Endothelial cell of umbilical vein (primary cell): ENCODE measurements at regions of chr4 and their contacts with region 1.

Region 1: GRCh38 chr4:123776254-123776653 is 379.7 kb downstream of the SPRY1 start:
- DNase-seq: no peak
- H3K4me3 ChIP-seq: no peak overlapping the region
- H3K27ac ChIP-seq: no peak overlapping the region
- H3K4me1 ChIP-seq: peaks cover 11% of the 10 kb centered on the region
- H3K27me3 ChIP-seq: no peaks in the 10 kb centered on the region
- CTCF ChIP-seq: no peak
- POLR2A ChIP-seq: no peak

Region 2: DNA sequence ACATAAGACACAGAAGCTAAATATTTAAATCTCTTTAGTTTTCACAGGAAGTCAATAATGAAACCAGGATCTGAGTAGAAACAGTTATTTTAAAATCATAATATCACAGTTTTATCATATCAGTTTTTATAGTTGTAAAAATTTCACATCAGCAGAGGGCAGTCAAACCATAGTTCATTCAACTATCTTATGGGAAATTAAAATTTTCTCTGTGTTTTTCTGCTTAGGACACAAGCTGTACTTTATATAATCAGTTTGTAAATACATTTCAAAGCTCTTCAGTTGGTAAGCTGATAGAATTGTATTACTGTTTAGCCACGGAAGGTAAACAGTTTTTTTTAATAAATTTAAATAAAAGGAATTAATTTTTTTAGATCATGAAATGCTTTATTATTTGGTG is 649.0 kb before region 1 on chr4:
- CTCF ChIA-PET with region 1: interaction called, 7 read pairs
- POLR2A ChIA-PET with region 1: no interaction called
- dilution Hi-C with region 1: no loop called
- intact Hi-C with region 1: loop called (anchors 10 kb)
- DNase-seq: peak; percentile 67
- H3K4me3 ChIP-seq: no peak overlapping the region
- H3K27ac ChIP-seq: peak overlapping the region; percentile 65
- H3K4me1 ChIP-seq: peaks cover 19% of the 10 kb centered on the region
- H3K27me3 ChIP-seq: no peaks in the 10 kb centered on the region
- CTCF ChIP-seq: no peak
- POLR2A ChIP-seq: no peak

Region 3: DNA sequence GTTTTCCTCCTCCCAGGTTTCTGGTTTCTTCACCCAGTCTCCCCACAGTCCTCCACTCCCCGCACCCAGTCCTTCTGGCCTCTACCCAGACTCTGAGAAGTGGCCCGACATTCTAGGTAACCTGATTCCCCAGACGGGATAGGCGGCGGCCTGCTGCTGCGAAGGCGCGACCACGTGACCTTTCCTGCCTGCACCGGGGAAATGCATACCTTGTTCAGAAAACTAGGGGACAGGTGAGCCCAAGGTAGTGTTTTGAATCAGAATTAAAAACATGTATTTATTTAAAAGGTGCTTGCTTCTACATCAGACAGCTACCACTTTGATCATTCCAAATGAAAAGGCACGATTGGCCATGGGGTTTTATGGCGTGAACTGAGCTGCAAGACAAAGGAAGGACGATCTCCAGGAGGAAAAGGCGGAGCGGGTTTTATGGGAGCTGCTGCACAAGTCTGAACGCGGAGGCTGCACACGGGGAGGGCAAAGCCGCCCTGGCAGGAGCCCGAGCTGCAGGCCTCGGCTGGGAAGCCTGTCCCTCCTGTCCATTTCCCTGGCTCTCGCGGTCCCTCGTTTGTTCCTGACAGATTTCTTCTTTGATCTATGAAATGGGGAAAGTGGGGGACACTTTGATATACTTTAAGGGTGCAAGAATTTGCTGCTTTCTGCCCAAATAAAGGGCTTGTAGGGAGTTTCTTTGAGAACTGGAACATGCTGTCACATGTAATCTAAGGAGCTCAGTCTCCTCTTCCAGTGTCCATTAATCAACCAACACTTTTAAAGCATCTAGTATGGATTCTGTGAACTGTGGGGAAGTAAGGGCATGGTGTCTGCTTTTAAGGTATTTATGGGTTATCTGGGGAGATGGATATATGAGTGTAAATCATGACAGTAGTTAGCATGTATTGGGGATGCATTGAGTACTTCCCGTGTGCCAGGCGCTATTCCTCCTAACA is 228.8 kb before region 1 on chr4:
- CTCF ChIA-PET with region 1: no interaction called
- POLR2A ChIA-PET with region 1: no interaction called
- dilution Hi-C with region 1: no loop called
- intact Hi-C with region 1: no loop called
- DNase-seq: no peak
- H3K4me3 ChIP-seq: no peak overlapping the region
- H3K27ac ChIP-seq: no peak overlapping the region
- H3K4me1 ChIP-seq: no peaks in the 10 kb centered on the region
- H3K27me3 ChIP-seq: peaks cover 52 to 54% of the 10 kb centered on the region in 2 experiments
- CTCF ChIP-seq: no peak
- POLR2A ChIP-seq: no peak

Region 4: GRCh38 chr4:123922847-123923246 is 146.6 kb after region 1 on chr4:
- CTCF ChIA-PET with region 1: interaction called, 13 read pairs
- POLR2A ChIA-PET with region 1: no interaction called
- dilution Hi-C with region 1: no loop called
- intact Hi-C with region 1: loop called (anchors 1 kb)
- DNase-seq: peak; percentile 91
- H3K4me3 ChIP-seq: no peak overlapping the region
- H3K27ac ChIP-seq: peak overlapping the region; percentile 93
- H3K4me1 ChIP-seq: peaks cover 20% of the 10 kb centered on the region
- H3K27me3 ChIP-seq: no peaks in the 10 kb centered on the region
- CTCF ChIP-seq: no peak
- POLR2A ChIP-seq: peak; percentile 78

Region 5: DNA sequence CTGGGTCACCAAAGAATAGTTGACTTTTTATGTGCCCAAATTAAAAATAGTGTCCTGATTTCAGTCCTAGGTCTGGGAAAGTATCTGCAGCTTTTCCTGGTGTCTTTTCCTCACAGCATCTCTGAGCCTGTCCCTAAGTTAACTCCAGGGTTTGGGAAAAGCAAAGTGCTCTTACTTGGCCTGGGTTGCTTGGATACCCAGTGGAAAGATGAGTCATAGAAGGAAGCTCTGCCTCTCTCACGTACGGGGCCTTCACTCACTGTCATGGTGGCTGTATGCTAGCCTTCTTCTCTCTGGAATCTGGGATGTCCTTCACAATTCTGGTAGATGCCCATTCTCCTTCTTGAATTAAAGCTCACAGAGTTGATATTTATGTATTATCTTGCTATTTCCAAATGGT is 329.0 kb after region 1 on chr4:
- CTCF ChIA-PET with region 1: interaction called, 11 read pairs
- POLR2A ChIA-PET with region 1: no interaction called
- dilution Hi-C with region 1: no loop called
- intact Hi-C with region 1: no loop called
- DNase-seq: peak; percentile 22
- H3K4me3 ChIP-seq: no peak overlapping the region
- H3K27ac ChIP-seq: no peak overlapping the region
- H3K4me1 ChIP-seq: peaks cover 3% of the 10 kb centered on the region
- H3K27me3 ChIP-seq: no peaks in the 10 kb centered on the region
- CTCF ChIP-seq: no peak
- POLR2A ChIP-seq: no peak

Region 6: DNA sequence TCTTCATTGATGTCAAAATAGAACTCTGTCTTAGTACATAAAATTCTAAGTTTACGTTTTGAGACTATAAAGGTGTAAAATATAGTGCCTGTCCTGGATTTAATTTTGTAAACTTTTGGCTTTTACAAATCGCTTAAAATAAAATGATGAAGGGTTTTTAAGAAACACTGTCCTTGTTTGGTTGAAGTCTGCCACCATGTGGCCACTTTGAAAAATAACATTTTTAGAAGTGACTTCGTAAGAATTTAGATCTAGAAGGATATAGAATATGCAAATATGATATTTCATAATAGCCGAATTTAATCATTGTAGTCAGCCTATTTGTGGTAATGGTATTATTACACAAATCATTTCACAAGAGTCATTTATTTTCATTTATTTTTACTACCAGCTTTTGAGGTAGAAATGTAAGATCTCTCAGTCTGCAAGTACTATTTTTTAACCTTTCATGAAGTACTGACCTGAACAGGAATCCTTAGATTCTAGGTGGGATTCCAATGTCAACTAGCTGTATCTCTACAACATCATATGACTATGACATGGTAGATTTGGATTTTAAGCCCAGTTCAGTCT is 1507.5 kb after region 1 on chr4:
- CTCF ChIA-PET with region 1: interaction called, 13 read pairs
- POLR2A ChIA-PET with region 1: no interaction called
- dilution Hi-C with region 1: no loop called
- intact Hi-C with region 1: no loop called
- DNase-seq: peak; percentile 54
- H3K4me3 ChIP-seq: no peak overlapping the region
- H3K27ac ChIP-seq: no peak overlapping the region
- H3K4me1 ChIP-seq: peaks cover 4% of the 10 kb centered on the region
- H3K27me3 ChIP-seq: no peaks in the 10 kb centered on the region
- CTCF ChIP-seq: peak; percentile 8 to 26
- POLR2A ChIP-seq: no peak